OCI-LY7 (cell line): ENCODE measurements at regions of chr12 and their contacts with region 1.

Region 1: GRCh38 chr12:50763639-50764285 is at the start of gene ATF1:
- DNase-seq: peak; percentile 94
- H3K4me3 ChIP-seq: peak within 1 kb of the TSS; percentile 82
- H3K27ac ChIP-seq: peak within 1 kb of the TSS; percentile 84
- H3K4me1 ChIP-seq: peaks cover 32% of the 10 kb centered on the region
- CTCF ChIP-seq: no peak
- total RNA-seq, gene ATF1: 47.4 and 83.3 TPM in 2 replicates

Region 2: GRCh38 chr12:50690925-50691324 is 72.8 kb before region 1 on chr12:
- CTCF ChIA-PET with region 1: no interaction called
- POLR2A ChIA-PET with region 1: no interaction called
- intact Hi-C with region 1: no loop called
- DNase-seq: no peak
- H3K4me3 ChIP-seq: no peak overlapping the region
- H3K27ac ChIP-seq: no peak overlapping the region
- H3K4me1 ChIP-seq: no peaks in the 10 kb centered on the region
- CTCF ChIP-seq: no peak

Region 3: DNA sequence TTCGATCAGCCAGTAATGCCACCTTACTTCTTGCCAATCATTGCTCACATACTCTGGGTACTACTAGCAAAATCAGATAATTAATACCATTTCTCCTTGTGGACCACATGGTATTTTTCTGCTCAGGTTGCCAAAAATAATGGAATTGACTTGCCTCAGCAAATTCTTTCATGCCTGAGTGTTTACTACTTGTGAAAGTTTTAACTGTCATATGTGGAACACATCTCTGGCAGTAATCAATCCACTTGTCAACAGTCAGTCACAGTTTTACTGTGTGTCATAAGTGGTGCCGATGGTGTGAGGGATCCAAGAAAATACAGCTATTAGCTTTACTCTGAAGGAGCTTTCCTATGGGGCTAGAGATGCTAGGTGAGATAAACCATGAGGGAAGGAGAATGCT is 55.1 kb before region 1 on chr12:
- CTCF ChIA-PET with region 1: no interaction called
- POLR2A ChIA-PET with region 1: no interaction called
- intact Hi-C with region 1: no loop called
- DNase-seq: no peak
- H3K4me3 ChIP-seq: no peak overlapping the region
- H3K27ac ChIP-seq: no peak overlapping the region
- H3K4me1 ChIP-seq: no peaks in the 10 kb centered on the region
- CTCF ChIP-seq: no peak

Region 4: GRCh38 chr12:50745861-50746260 is 17.9 kb before region 1 on chr12:
- CTCF ChIA-PET with region 1: no interaction called
- POLR2A ChIA-PET with region 1: no interaction called
- intact Hi-C with region 1: no loop called
- DNase-seq: no peak
- H3K4me3 ChIP-seq: no peak overlapping the region
- H3K27ac ChIP-seq: no peak overlapping the region
- H3K4me1 ChIP-seq: no peaks in the 10 kb centered on the region
- CTCF ChIP-seq: no peak

Region 5: DNA sequence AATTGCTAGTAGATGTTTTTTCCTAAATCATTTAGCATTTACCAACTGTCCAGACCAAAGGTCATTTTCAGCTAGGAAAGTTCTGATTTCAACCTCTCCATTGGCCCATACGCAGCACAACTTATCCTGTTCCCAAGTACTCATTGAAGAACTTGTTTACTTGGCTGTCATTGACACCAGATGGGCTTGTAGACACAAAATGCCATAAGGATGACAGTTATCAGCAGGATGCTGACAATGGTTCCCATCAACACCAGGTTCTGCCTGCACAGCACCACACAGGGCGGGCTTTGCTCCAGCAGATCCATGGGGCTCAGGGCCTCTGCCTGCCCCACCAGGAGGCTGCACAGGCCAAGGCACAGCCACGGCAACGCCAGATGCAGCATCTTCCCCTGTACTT is 42.4 kb after region 1 on chr12:
- CTCF ChIA-PET with region 1: no interaction called
- POLR2A ChIA-PET with region 1: no interaction called
- intact Hi-C with region 1: loop called (anchors 5 kb)
- DNase-seq: no peak
- H3K4me3 ChIP-seq: no peak overlapping the region
- H3K27ac ChIP-seq: no peak overlapping the region
- H3K4me1 ChIP-seq: no peaks in the 10 kb centered on the region
- CTCF ChIP-seq: no peak

Region 6: GRCh38 chr12:50960130-50960529 is 196.4 kb after region 1 on chr12:
- CTCF ChIA-PET with region 1: no interaction called
- POLR2A ChIA-PET with region 1: no interaction called
- intact Hi-C with region 1: no loop called
- DNase-seq: peak; percentile 11
- H3K4me3 ChIP-seq: no peak overlapping the region
- H3K27ac ChIP-seq: no peak overlapping the region
- H3K4me1 ChIP-seq: peaks cover 12% of the 10 kb centered on the region
- CTCF ChIP-seq: no peak

Region 7: DNA sequence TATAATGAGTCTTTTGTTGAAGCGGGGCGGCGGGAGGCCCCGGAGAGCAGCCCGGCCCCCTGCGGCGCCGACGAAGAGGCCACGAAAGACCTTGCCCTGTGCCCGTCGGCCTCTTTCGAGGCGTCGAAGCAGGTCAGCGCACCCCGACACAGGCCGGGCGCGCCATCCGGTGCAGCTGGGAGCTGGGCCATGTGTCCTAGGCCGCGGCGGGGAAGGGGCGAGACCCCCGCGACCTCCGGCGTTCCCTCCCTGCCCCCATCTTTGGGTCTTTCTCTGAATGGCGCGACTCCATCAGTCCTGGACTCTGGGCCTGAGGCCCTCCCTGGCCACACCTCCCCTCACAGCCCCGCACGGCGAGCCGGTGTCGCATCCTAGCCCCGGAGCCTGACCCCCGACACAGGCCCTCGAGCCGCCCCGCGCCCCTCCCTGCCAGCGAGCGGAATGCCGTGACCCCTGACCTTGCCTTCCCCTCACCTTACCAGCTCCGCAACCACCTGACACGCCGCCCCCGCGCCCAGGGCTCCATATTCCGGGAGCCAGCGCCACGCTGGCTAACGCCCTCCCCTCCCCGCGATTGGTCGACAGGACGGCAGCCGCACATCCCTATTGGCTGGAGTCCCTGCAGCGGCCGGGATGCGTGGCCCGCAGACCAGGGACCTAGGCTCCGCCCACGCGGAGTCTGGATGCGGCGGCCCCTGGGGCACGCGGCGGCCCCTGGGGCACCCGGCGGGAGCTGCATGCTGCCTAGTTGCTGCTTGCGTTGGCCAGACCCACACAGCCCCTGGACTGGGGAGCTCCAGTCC is 262.3 kb after region 1 on chr12 and contains the start of gene SLC11A2:
- CTCF ChIA-PET with region 1: no interaction called
- POLR2A ChIA-PET with region 1: interaction called, 4 read pairs
- intact Hi-C with region 1: loop called (anchors 2 kb)
- DNase-seq: peak; percentile 94
- H3K4me3 ChIP-seq: peak within 1 kb of the TSS; percentile 90
- H3K27ac ChIP-seq: peak within 1 kb of the TSS; percentile 33
- H3K4me1 ChIP-seq: peaks cover 40% of the 10 kb centered on the region
- CTCF ChIP-seq: no peak
- total RNA-seq, gene SLC11A2: 28.2 and 35.0 TPM in 2 replicates